ENCODE measurements at regions of chr6 and their contacts with region 1.

Region 1: DNA sequence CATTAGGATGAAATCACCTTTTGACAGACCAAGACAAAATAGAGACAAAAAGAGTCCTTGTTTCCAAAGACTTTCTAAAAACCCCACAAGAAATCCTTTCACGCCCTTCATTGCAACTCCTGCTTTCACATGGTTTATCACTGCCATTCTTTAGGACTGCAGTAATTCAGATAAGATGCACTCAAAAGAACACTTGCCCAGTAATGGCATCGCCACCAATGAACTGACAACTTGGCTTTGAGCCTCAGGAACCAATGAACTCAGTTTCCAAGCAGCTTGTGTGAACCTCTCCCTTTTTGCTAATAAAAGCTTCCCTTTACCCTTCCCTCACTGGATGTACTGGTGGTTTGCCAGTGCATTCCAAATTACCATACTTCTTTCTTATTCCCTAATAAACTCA is 21.8 kb downstream of the OSTM1 start:
- DNase-seq: no peak
- ATAC-seq: no peak
- H3K4me3 ChIP-seq: no peak overlapping the region
- H3K27ac ChIP-seq: no peak overlapping the region
- H3K4me1 ChIP-seq: no peaks in the 10 kb centered on the region
- H3K27me3 ChIP-seq: no peaks in the 10 kb centered on the region
- CTCF ChIP-seq: no peak

Region 2: DNA sequence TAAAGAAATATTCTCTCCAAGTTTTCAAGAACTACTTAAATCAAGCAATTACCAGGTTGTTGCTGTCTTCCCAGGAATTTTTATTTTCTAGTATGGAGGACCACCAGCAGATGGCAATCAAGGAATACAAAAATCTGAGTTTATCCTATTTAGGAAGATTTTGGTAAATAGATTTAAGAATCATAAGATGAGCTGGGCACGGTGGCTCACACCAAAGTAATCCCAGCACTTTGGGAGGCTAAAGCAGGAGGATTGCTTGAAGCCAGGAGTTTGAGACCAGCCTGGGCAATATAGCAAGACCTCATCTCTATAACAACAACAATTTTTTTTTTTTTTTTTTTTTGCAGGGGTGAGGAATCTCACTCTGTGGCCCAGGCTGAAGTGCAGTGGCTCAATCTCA is 75.4 kb before region 1 on chr6:
- intact Hi-C with region 1: loop called in 2 of 3 experiments (anchors 2 to 5 kb)
- DNase-seq: no peak
- ATAC-seq: peak in 3 of 4 donors; percentile 47 to 48 (median 47)
- H3K4me3 ChIP-seq: no peak overlapping the region
- H3K27ac ChIP-seq: no peak overlapping the region
- H3K4me1 ChIP-seq: peaks cover 0 to 4% (median 0%) of the 10 kb centered on the region in 3 donors
- H3K27me3 ChIP-seq: no peaks in the 10 kb centered on the region
- CTCF ChIP-seq: peak in 2 of 4 donors; percentile 17 to 24

Region 3: DNA sequence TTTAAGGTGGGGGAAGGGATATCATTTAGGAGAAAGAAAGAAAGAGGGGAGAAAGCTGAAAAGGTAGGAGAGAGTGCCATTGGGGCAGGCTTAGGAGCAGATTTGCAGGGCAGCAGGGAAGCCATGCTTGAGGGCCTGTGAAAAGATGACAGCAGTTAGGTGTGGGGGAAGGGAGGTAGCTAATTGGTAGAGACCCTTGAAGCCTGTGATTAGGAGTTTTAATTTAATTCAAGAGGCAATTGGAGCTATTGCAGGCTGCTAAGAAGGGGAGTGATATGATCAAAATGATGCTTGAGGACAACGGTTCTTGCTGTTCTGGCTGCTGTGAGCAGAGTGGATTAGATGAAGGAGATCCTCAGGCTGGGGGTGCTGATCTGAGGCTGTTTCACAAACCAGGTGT is 70.2 kb before region 1 on chr6:
- intact Hi-C with region 1: loop called in 2 of 3 experiments (anchors 2 to 5 kb)
- DNase-seq: no peak
- ATAC-seq: no peak
- H3K4me3 ChIP-seq: no peak overlapping the region
- H3K27ac ChIP-seq: no peak overlapping the region
- H3K4me1 ChIP-seq: no peaks in the 10 kb centered on the region
- H3K27me3 ChIP-seq: no peaks in the 10 kb centered on the region
- CTCF ChIP-seq: no peak

Region 4: DNA sequence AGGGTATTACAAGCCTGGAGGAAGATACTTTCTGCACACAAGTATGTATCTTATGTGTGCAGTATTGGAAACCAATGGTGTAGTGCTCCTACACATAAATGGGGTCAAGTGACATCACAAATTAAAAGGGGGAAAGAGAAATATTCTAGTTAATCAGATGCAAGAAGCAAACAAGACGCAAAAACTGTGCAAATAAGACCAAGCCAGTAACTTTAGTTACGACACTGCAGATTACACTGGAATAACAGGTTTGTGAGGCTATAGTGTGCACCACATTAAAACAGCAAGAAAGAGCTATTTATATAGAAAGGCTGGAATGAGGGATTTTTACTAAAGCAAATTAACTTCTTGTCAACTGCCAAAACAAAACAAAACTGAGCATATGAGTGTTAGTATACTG is 158.9 kb after region 1 on chr6:
- intact Hi-C with region 1: no loop called
- DNase-seq: no peak
- ATAC-seq: no peak
- H3K4me3 ChIP-seq: no peak overlapping the region
- H3K27ac ChIP-seq: no peak overlapping the region
- H3K4me1 ChIP-seq: peaks cover 0 to 2% (median 0%) of the 10 kb centered on the region in 3 donors
- H3K27me3 ChIP-seq: no peaks in the 10 kb centered on the region
- CTCF ChIP-seq: no peak

Region 5: GRCh38 chr6:108268845-108269244 is 216.1 kb after region 1 on chr6:
- intact Hi-C with region 1: no loop called
- DNase-seq: no peak
- ATAC-seq: no peak
- H3K4me3 ChIP-seq: no peak overlapping the region
- H3K27ac ChIP-seq: no peak overlapping the region
- H3K4me1 ChIP-seq: no peaks in the 10 kb centered on the region
- H3K27me3 ChIP-seq: no peaks in the 10 kb centered on the region
- CTCF ChIP-seq: no peak

Measured in pancreas (tissue), 10 donors.